ENCODE measurements at regions of chr1 and their contacts with region 1.

Region 1: DNA sequence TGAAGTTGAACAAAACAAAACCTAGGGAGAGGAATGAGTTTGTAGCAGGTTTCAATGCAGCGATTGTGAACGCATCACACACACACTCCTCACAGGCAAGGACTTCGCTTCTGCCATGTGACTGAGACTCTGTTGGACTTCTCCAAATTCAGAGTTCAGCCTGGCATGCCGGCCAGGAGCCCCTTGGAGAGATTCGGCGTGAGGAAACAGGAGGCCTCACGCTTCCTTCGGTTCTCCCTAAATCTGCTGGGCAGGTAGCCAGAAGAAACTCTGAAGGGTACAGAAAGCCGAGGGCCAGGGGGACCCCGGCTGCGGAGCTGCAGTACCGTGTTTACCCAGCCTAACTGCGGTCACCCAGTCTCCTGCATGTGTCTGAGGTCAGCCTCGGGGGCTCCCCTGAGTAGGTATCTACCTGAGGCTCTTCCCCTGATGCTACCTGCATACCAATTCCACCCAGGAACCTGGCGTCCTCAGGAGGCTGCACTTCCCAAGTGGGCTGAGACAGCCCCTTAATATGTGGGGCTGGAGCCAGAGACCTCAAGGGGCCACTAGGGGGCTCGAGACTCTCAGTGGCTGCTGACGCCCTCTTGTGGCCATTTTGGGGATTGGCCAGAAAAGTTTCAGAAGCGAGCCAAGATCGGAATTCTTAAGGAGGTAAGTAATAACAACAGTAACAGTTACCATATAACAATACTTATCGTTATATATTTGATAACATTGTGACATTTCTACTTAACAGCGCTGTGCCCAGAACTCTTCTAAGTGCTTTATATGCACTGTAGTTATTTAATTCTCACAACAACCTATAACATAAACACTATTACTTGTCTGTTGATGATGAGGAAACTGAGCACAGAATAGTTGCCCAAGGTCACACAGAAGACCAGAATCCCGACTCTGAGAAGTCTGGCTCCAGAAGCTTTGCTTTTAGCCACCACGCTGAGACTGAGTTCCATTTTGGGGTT is 2.7 kb upstream of the ANXA9 start:
- DNase-seq: peak; percentile 53 to 96 (median 88)

Region 2: GRCh38 chr1:150876119-150876454 is 103.3 kb before region 1 on chr1:
- intact Hi-C with region 1: loop called (anchors 10 kb)
- DNase-seq: peak in 3 of 42 donors; percentile 28 to 53 (median 51)

Region 3: GRCh38 chr1:150925816-150926741 is 53.3 kb before region 1 on chr1 and contains the start of gene SETDB1:
- intact Hi-C with region 1: loop called (anchors 10 kb)
- DNase-seq: peak; percentile 80 to 97 (median 92)

Region 4: GRCh38 chr1:151013518-151013917 is 34.1 kb after region 1 on chr1:
- intact Hi-C with region 1: no loop called
- DNase-seq: no peak

Measured in head of caudate nucleus (tissue), 42 donors.